Activated CD8-positive, alpha-beta T cell treated with anti-CD3 and anti-CD28 coated beads, Interleukin-2, amount 10 ng/mL, durations not matched to agents 7 days and 5 days (primary cell): ENCODE measurements at regions of chr11 and their contacts with region 1.

Region 1: DNA sequence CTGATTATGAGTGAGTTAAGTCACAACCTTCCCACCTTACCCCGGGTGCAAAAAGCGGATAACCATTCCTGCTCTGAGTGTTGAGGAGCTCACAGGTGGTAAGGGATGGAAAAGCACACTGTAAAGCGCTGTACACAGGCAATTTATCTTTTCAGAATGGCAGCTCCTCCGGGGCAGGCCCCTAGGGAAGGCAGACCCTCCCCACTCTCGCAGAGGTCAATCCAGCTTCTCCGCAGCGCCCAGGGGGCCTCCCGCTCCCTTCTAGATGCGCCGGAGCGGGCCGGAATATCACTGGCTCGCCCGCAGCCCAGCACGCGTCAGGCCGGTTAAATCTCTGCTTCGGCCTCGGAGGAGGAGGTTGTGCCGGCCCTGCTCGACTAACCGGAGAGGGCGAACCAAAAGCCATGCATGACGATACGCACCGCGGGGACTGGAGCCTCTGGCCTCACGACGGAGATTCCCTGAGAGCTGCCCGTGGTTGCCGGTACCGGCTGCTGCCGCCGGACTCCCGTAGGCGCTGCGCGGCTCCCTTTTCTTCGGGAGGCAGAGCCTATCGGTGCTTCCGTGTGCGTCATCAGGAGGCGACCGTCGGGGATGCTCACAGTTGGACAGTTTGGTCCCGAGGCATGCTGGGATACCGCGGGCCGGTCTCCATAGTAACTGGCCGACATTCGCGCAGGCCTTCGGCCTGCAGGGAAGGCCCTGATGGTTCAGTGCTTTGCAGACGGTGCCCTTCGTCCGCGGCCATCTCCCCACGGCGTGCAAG is at the start of gene BRMS1:
- DNase-seq: peak; percentile 98
- ATAC-seq: peak; percentile 77
- H3K4me3 Mint-ChIP-seq: peak within 1 kb of the TSS; percentile 96
- H3K27ac Mint-ChIP-seq: peak within 1 kb of the TSS; percentile 93
- H3K4me1 Mint-ChIP-seq: peaks cover 55% of the 10 kb centered on the region
- H3K27me3 Mint-ChIP-seq: peaks cover 2% of the 10 kb centered on the region
- total RNA-seq, gene BRMS1: 53.2 to 57.1 TPM

Region 2: DNA sequence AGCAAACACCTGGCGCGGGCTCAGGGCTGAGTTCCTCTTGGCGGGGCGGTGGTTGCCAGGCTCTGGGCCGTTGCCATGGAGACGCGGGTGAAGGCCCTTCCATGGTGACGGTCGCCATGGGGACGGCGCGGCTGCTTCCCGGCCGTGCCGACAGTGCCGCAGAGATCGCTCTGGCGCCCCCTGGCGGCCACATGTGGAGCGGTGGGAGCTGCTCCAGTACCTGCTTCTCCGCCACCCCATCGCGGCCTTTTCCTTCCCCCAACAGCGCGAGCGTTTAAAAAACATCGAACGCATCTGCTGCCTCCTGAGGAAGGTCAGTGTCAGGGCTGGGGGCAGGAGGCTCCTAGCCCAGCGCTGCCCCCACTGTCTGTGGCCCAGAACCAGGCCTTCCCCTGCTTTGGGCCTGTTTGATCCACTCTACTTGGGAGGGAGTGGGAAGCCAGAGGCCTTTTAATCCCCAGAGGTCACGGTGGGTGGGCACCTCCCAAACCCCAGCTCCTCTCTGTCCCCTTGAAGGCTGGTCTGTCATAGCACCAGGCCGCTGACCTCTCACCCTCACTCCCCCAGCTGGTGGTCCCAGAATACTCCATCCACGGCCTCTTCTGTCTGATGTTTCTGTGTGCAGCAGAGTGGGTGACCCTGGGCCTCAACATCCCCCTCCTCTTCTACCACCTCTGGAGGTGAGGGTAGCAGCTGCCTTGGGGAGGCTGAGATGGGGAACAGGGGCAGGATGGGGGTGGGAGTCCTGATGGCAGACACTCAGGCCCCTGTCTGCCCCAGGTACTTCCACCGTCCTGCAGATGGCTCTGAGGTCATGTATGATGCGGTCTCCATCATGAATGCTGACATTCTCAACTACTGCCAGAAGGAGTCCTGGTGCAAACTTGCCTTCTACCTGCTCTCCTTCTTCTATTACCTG is 62.0 kb before region 1 on chr11:
- CTCF ChIA-PET with region 1: no interaction called
- POLR2A ChIA-PET with region 1: no interaction called
- DNase-seq: peak; percentile 99
- ATAC-seq: peak; percentile 86
- H3K4me3 Mint-ChIP-seq: no peak overlapping the region
- H3K27ac Mint-ChIP-seq: peak overlapping the region; percentile 69
- H3K4me1 Mint-ChIP-seq: peaks cover 44% of the 10 kb centered on the region
- H3K27me3 Mint-ChIP-seq: peaks cover 7% of the 10 kb centered on the region

Region 3: GRCh38 chr11:66317723-66318599 is 26.8 kb before region 1 on chr11:
- CTCF ChIA-PET with region 1: interaction called, 79 read pairs
- POLR2A ChIA-PET with region 1: interaction called, 28 read pairs
- DNase-seq: peak; percentile 95
- ATAC-seq: peak; percentile 66
- H3K4me3 Mint-ChIP-seq: peak overlapping the region; percentile 87
- H3K27ac Mint-ChIP-seq: peak overlapping the region; percentile 99
- H3K4me1 Mint-ChIP-seq: peaks cover 73% of the 10 kb centered on the region
- H3K27me3 Mint-ChIP-seq: no peaks in the 10 kb centered on the region

Region 4: DNA sequence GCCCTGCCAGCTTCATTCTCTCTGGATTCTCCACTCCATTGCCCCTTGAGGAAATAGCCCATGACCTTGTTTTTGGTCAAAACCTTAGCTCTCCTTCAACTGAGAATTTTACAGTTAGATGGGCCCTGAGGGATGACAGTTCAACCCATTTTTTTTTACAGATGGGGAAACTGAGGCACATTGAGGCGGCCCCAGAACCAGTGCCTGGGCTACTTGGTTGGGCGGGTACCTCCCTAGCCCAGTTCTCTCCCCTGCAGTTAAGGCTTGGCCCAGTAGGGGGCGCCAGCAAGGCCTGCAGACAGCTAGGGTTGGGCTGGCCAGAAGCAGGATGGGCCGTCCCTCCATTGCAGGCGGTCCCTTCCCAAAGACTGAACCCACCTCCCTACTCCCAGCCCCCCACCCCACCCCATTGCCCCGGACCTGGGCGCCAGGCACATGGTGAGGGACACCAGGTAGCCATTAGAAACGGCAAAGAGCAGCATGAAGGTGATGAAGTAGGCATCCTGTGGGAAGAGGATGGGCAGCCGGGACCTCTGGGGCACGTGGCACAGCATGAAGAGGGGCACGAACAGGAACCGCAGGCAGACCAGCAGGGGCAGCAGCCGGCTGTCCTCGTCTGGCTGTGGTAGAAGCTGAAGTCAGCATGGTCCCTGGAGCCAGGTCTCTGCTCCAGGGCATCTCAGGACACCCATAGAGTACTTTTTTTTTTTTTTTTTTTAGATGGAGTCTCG is 19.2 kb after region 1 on chr11:
- CTCF ChIA-PET with region 1: interaction called, 44 read pairs
- POLR2A ChIA-PET with region 1: no interaction called
- DNase-seq: peak; percentile 80
- ATAC-seq: peak; percentile 78
- H3K4me3 Mint-ChIP-seq: no peak overlapping the region
- H3K27ac Mint-ChIP-seq: no peak overlapping the region
- H3K4me1 Mint-ChIP-seq: no peaks in the 10 kb centered on the region
- H3K27me3 Mint-ChIP-seq: no peaks in the 10 kb centered on the region

Region 5: GRCh38 chr11:66371627-66372415 is 27.1 kb after region 1 on chr11 and contains the start of gene SLC29A2:
- CTCF ChIA-PET with region 1: interaction called, 11 read pairs
- POLR2A ChIA-PET with region 1: interaction called, 8 read pairs
- DNase-seq: peak; percentile 91
- ATAC-seq: peak; percentile 87
- H3K4me3 Mint-ChIP-seq: peak within 1 kb of the TSS; percentile 86
- H3K27ac Mint-ChIP-seq: peak within 1 kb of the TSS; percentile 92
- H3K4me1 Mint-ChIP-seq: peaks cover 27% of the 10 kb centered on the region
- H3K27me3 Mint-ChIP-seq: peaks cover 3% of the 10 kb centered on the region
- total RNA-seq, gene SLC29A2: 10.0 to 11.1 TPM